Breast epithelium (tissue), 4 donors: ENCODE measurements at regions of chr6 and their contacts with region 1.

Region 1: DNA sequence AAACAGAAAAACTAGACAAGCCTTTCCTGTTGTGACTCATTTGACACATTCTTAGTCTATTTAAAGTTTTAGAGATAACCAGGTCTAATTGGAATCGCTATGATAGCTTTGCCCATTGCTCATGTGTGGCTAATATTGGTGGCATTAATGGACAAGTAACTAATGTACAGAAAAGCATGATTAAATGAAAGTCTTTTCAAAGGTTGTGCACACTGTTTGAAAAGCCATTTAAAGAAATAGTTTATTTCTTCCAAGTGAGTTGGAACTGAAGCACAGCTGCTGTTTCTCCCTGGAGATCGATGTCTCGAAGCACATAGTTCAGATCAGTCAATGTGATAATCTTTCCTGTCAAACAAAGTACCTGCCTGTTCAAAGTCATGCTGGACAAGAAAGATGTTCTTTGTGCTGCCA is 420.2 kb upstream of the OPRM1 start:
- DNase-seq: no peak
- H3K4me3 ChIP-seq: no peak overlapping the region
- H3K27ac ChIP-seq: no peak overlapping the region
- H3K4me1 ChIP-seq: peaks cover 0 to 4% of the 10 kb centered on the region in 2 donors
- H3K27me3 ChIP-seq: no peaks in the 10 kb centered on the region
- CTCF ChIP-seq: no peak
- POLR2A ChIP-seq: no peak

Region 2: GRCh38 chr6:153242767-153243166 is 376.0 kb before region 1 on chr6:
- intact Hi-C with region 1: loop called (anchors 5 kb)
- DNase-seq: no peak
- H3K4me3 ChIP-seq: no peak overlapping the region
- H3K27ac ChIP-seq: no peak overlapping the region
- H3K4me1 ChIP-seq: no peaks in the 10 kb centered on the region
- H3K27me3 ChIP-seq: no peaks in the 10 kb centered on the region
- CTCF ChIP-seq: no peak
- POLR2A ChIP-seq: no peak

Region 3: GRCh38 chr6:153634416-153634815 is 15.6 kb after region 1 on chr6:
- intact Hi-C with region 1: no loop called
- DNase-seq: no peak
- H3K4me3 ChIP-seq: no peak overlapping the region
- H3K27ac ChIP-seq: no peak overlapping the region
- H3K4me1 ChIP-seq: no peaks in the 10 kb centered on the region
- H3K27me3 ChIP-seq: no peaks in the 10 kb centered on the region
- CTCF ChIP-seq: no peak
- POLR2A ChIP-seq: no peak